ENCODE measurements at regions of chr9 and their contacts with region 1.

Region 1: GRCh38 chr9:114529285-114529684 is 24.0 kb upstream of the WHRN start:
- DNase-seq: no peak
- H3K4me3 ChIP-seq: no peak overlapping the region
- H3K27ac ChIP-seq: no peak overlapping the region
- H3K4me1 ChIP-seq: no peaks in the 10 kb centered on the region
- H3K27me3 ChIP-seq: peaks cover 0 to 6% (median 0%) of the 10 kb centered on the region in 5 experiments

Region 2: GRCh38 chr9:114417511-114417910 is 111.8 kb before region 1 on chr9:
- CTCF ChIA-PET with region 1: no interaction called
- POLR2A ChIA-PET with region 1: no interaction called
- DNase-seq: no peak
- H3K4me3 ChIP-seq: no peak overlapping the region
- H3K27ac ChIP-seq: no peak overlapping the region
- H3K4me1 ChIP-seq: peaks cover 0 to 10% (median 2%) of the 10 kb centered on the region in 4 experiments
- H3K27me3 ChIP-seq: no peaks in the 10 kb centered on the region

Region 3: DNA sequence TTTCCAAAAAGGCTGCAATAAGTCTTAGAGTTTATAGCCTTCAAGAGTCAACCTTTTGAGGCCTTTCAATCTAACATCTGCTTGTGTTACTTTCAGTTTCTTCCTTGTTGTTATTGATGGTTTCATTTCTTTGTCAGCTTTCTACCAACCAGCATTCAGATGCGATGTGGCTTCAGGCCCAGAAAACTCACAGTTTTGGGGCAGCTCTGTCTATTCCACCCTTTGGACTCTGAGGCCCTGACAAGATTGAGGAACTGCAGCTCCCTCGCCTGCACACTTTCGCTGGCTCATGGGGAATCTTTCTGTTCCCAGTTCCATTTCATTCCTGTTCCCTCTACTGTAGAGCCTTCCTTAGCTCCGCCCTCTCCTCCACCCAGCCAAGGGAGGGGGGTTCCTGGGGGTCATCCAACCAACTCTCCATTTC is 10.7 kb before region 1 on chr9:
- CTCF ChIA-PET with region 1: interaction called, 10 read pairs
- POLR2A ChIA-PET with region 1: no interaction called
- DNase-seq: peak in 1 of 3 donors; percentile 35
- H3K4me3 ChIP-seq: no peak overlapping the region
- H3K27ac ChIP-seq: no peak overlapping the region
- H3K4me1 ChIP-seq: peaks cover under 1 to 5% (median 4%) of the 10 kb centered on the region in 4 experiments
- H3K27me3 ChIP-seq: peaks cover 0 to 15% (median 0%) of the 10 kb centered on the region in 5 experiments

Measured in common myeloid progenitor, CD34-positive (primary cell).